Common myeloid progenitor, CD34-positive (primary cell): ENCODE measurements at regions of chr11 and their contacts with region 1.

Region 1: GRCh38 chr11:47565340-47566148 is at the start of gene PTPMT1:
- DNase-seq: peak; percentile 63 to 81 (median 72)
- H3K4me3 ChIP-seq: peak within 1 kb of the TSS; percentile 19 to 93 (median 83)
- H3K27ac ChIP-seq: peak within 1 kb of the TSS; percentile 80 to 90
- H3K4me1 ChIP-seq: peaks cover 6 to 16% (median 14%) of the 10 kb centered on the region in 4 experiments
- H3K27me3 ChIP-seq: no peaks in the 10 kb centered on the region

Region 2: DNA sequence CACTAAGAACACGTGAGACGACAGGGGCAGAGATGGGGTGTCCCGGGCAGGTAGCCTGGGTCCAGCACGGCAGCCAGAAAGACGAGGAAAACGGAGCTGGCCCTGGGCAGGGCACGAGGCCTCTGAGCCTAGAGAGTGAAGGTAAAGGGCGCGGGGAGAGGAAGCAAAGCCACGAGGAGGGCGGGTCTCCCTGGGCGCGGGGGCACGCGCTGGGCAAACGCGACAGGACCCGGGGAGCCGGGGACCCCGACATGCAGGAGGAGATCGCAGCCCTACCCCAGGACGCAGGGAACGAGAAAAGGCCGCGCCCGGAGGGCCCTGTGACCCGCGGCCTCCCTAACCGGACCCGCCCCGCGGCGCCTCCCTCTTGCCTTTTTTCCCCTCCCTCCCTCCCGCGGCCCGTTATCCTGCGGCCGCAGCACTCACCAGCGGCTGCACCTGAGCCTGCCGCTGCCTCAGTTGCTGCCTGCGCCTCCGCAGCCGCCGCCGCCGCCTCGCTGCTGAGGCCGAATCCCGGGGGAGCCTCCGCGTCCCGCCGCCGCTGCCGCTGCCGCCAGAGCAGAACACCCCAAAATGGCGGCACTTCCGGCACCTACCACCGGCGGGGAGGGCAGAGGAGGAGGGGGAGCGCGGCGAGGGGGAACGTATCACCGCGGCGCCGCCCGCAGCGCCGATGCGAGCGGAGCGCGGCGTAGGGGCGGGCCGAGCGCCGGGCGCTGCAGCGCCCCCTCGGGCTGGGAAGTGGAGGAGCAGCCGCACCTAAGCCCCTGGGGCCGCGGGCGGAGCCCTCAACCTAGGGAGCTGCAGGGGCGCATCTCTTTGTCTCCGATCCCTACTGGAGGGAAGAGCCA is 12.8 kb before region 1 on chr11 and contains the start of gene CELF1:
- CTCF ChIA-PET with region 1: interaction called, 23 read pairs
- POLR2A ChIA-PET with region 1: interaction called, 4 read pairs
- DNase-seq: peak; percentile 93 to 96 (median 96)
- H3K4me3 ChIP-seq: peak within 1 kb of the TSS; percentile 72 to 97 (median 88)
- H3K27ac ChIP-seq: peak within 1 kb of the TSS; percentile 64 to 94
- H3K4me1 ChIP-seq: peaks cover 18 to 35% (median 31%) of the 10 kb centered on the region in 4 experiments
- H3K27me3 ChIP-seq: no peaks in the 10 kb centered on the region

Region 3: DNA sequence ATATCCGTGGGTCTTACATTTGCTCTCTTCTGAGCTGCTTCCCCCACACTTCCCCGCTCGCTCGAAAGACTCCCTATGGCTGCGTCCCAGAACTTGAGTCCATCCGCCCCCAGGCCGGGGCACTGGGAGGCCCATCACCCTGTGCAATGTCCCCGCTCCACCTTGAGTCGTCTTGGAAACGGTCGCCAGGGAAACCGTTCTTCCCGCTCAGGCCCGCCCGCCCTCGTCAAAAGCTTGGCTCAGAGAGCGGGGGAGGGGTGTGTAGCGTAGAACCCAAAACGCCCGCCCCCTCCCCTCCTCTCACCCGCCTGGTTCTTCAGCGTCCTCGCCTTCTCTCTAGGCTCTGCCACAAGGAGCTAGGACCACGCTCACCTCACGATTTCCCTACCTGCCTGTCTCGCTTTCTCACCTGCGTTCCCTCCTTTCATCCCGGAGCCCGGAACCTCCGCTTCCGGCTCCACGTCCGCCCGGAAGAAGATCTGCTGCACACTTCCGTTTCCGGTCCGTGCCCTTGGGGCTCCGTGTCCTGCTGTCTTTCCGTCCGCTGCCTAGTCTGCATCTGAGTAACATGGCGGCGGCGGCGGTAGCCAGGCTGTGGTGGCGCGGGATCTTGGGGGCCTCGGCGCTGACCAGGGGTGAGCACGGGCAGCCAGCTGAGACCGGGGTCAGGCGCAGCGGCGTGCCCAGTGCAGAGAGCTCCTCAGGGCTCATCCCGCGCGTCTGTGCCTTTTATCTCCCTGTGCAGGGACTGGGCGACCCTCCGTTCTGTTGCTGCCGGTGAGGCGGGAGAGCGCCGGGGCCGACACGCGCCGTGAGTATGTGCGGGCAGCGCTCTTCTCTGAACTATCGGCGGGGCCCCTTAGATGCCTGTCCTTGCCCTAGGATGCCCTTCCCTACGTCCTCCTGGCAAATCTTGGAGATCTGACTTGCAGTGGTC is 13.2 kb after region 1 on chr11 and contains the starts of genes KBTBD4 and NDUFS3:
- CTCF ChIA-PET with region 1: interaction called, 10 read pairs
- POLR2A ChIA-PET with region 1: interaction called, 11 read pairs
- DNase-seq: peak; percentile 90 to 95 (median 94)
- H3K4me3 ChIP-seq: peak within 1 kb of the TSS; percentile 85 to 99 (median 96)
- H3K27ac ChIP-seq: peak within 1 kb of the TSS; percentile 72 to 92
- H3K4me1 ChIP-seq: peaks cover 6 to 28% (median 21%) of the 10 kb centered on the region in 4 experiments
- H3K27me3 ChIP-seq: no peaks in the 10 kb centered on the region